IMR-90 (cell line): ENCODE measurements at regions of chr1 and their contacts with region 1.

Region 1: GRCh38 chr1:54715493-54716298 is at the start of gene TTC4:
- DNase-seq: peak; percentile 65
- ATAC-seq: peak; percentile 100
- H3K4me3 ChIP-seq: peak within 1 kb of the TSS; percentile 86
- H3K27ac ChIP-seq: peak within 1 kb of the TSS; percentile 74
- H3K4me1 ChIP-seq: no peaks in the 10 kb centered on the region
- H3K27me3 ChIP-seq: peaks cover 5% of the 10 kb centered on the region; the same call in 1 of the 2 replicates
- CTCF ChIP-seq: no peak
- POLR2A ChIP-seq: peak; percentile 74; the same call in 1 of the 2 replicates
- RAD21 ChIP-seq: no peak
- total RNA-seq, gene TTC4: 27.1 and 35.3 TPM in 2 replicates

Region 2: GRCh38 chr1:54499360-54500106 is 216.2 kb before region 1 on chr1:
- CTCF ChIA-PET with region 1: no interaction called
- POLR2A ChIA-PET with region 1: no interaction called
- dilution Hi-C with region 1: no loop called
- in situ Hi-C with region 1: no loop called
- intact Hi-C with region 1: loop called (anchors 2 kb)
- DNase-seq: peak; percentile 36
- ATAC-seq: peak; percentile 87
- H3K4me3 ChIP-seq: peak overlapping the region; percentile 11; the same call in 1 of the 2 replicates
- H3K27ac ChIP-seq: no peak overlapping the region
- H3K4me1 ChIP-seq: peaks cover 5% of the 10 kb centered on the region; the same call in 1 of the 2 replicates
- H3K27me3 ChIP-seq: peaks cover 52% of the 10 kb centered on the region
- CTCF ChIP-seq: peak; percentile 46
- POLR2A ChIP-seq: no peak
- RAD21 ChIP-seq: peak; percentile 44

Region 3: GRCh38 chr1:54764133-54764921 is 48.6 kb after region 1 on chr1 and contains the start of gene PARS2:
- CTCF ChIA-PET with region 1: no interaction called
- POLR2A ChIA-PET with region 1: no interaction called
- dilution Hi-C with region 1: no loop called
- in situ Hi-C with region 1: no loop called
- intact Hi-C with region 1: loop called (anchors 1 kb)
- DNase-seq: peak; percentile 100
- ATAC-seq: peak; percentile 99
- H3K4me3 ChIP-seq: peak within 1 kb of the TSS; percentile 74
- H3K27ac ChIP-seq: peak within 1 kb of the TSS; percentile 69
- H3K4me1 ChIP-seq: no peaks in the 10 kb centered on the region
- H3K27me3 ChIP-seq: peaks cover 3% of the 10 kb centered on the region; the same call in 1 of the 2 replicates
- CTCF ChIP-seq: no peak
- POLR2A ChIP-seq: peak; percentile 89
- RAD21 ChIP-seq: no peak
- total RNA-seq, gene PARS2: 6.1 and 6.3 TPM in 2 replicates